ENCODE measurements at regions of chr12 and their contacts with region 1.

Region 1: DNA sequence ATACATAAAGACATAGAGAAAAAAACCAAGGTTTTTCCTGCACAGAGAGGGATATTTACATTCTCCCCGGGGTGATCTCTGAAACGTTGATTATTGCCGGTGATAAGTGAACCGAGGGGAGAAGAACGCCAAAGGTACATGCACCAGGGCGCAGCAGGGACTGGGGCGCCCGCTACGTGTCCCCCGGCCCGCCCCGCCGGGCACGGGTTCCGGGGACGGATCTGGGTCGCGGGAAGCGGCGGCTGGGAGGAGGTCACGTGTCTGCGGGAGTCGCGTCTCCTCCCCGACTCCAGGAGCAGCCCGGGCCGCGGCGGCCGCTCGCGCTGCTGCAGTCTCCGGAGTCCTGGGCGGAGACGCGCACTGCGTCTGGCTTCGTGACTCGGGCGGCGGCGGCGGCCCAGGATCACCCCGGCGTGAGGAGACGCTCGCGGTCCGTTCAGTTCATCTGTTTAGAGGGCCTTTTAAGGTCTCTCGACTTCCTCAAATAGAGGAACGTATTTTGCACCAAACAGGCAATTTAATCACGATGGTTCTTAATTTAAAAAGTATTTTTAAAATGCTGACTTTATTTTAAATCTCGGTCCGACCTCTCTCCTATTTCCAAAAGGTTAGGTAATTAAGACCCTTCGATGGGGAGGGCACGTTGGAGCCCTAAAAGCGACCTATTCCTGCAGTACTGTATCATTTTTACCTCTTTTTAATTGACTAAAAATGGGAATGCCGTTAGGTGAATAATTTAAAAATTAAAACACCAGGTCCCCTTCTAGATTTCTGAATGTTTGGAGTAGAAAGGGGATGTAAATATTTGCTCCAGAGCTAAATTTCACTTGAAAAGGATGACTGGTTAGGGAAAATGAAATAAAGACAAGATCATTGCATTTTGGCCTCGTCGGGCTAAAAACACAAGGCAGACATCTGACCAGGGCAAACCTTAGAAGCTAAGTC is 1.8 kb upstream of the BHLHE41 start:
- DNase-seq: peak; percentile 84 to 88
- H3K4me3 ChIP-seq: peak overlapping the region; percentile 60 to 83 (median 72)
- H3K27ac ChIP-seq: peak overlapping the region; percentile 99
- H3K4me1 ChIP-seq: peaks cover 0 to 5% of the 10 kb centered on the region in 2 donors
- H3K27me3 ChIP-seq: no peaks in the 10 kb centered on the region
- CTCF ChIP-seq: no peak
- POLR2A ChIP-seq: no peak

Region 2: GRCh38 chr12:26195641-26196420 is 69.2 kb after region 1 on chr12:
- intact Hi-C with region 1: no loop called
- DNase-seq: peak; percentile 43 to 60
- H3K4me3 ChIP-seq: peak overlapping the region; percentile 58 to 88 (median 73)
- H3K27ac ChIP-seq: peak overlapping the region; percentile 93 to 96
- H3K4me1 ChIP-seq: peaks cover 0 to 11% of the 10 kb centered on the region in 2 donors
- H3K27me3 ChIP-seq: no peaks in the 10 kb centered on the region
- CTCF ChIP-seq: no peak
- POLR2A ChIP-seq: no peak

Region 3: GRCh38 chr12:26287671-26288381 is 161.2 kb after region 1 on chr12:
- intact Hi-C with region 1: loop called (anchors 10 kb)
- DNase-seq: peak; percentile 86 to 96
- H3K4me3 ChIP-seq: no peak overlapping the region
- H3K27ac ChIP-seq: peak overlapping the region; percentile 94 to 98
- H3K4me1 ChIP-seq: peaks cover 11 to 13% of the 10 kb centered on the region in 2 donors
- H3K27me3 ChIP-seq: no peaks in the 10 kb centered on the region
- CTCF ChIP-seq: peak in 1 of 3 donors; percentile 6
- POLR2A ChIP-seq: no peak